GM18951 (cell line): ENCODE measurements at regions of chr22 and their contacts with region 1.

Region 1: DNA sequence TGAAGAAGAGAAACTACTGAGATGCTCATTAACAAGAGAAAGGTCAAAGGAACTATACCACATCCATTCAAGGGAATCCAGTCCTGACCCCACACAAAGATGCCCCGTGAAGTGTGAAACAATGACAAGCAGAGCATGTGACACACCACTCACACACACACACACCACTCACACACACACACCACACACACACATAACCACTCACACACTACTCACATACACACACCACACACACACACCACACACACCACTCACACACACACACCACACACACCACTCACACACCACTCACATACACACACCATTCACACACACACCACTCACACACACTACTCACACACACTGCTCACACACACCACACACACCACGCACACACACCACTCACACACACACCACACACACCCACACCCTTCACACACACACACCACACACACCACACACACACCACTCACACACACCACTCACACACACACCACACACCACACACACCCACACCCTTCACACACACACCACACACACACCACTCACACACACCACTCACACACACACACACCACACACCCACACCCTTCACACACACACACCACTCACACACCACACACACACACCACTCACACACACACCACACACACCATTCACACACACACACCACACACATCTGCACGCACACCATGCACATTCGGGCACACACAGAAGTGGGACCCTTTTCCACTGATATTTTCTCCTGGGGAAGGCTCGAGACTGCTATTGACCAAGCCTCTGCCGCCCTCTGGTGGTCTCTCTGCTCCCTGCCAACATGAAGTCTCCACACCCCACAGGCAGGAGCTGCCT is 32.0 kb upstream of the COMT start:
- POLR2A ChIP-seq: no peak

Region 2: GRCh38 chr22:19730655-19731360 is 178.8 kb before region 1 on chr22:
- in situ Hi-C with region 1: loop called (anchors 5 kb)
- POLR2A ChIP-seq: no peak